GM23248 (cell line): ENCODE measurements at regions of chr18 and their contacts with region 1.

Region 1: GRCh38 chr18:45384137-45384961 is 230.9 kb upstream of the SLC14A2 start:
- DNase-seq: peak; percentile 70
- H3K4me3 ChIP-seq: no peak overlapping the region
- H3K27ac ChIP-seq: no peak overlapping the region
- H3K4me1 ChIP-seq: 0 out of 2 replicates have a peak, but pooled peaks cover 14% of the 10 kb centered on the region
- H3K27me3 ChIP-seq: no peaks in the 10 kb centered on the region

Region 2: DNA sequence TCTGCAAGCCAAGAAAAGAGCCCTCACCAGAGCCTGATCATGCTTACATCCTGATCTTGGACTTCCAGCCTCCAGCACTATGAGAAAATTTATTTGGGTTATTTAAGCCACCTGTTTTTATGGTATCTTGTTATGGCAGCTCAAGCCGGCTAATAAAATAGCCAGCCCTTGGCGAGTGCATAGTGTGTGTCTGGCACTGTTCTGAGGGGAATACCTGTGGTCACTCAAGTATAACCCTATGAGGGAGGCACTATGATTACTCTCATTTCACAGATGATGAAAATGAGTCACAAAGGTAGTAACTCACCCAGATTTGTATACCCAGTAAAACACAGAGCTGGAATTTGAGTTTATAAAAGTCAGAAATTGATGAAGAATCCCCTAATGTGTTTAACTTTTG is 1260.6 kb before region 1 on chr18:
- in situ Hi-C with region 1: loop called (anchors 25 kb)
- DNase-seq: no peak
- H3K4me3 ChIP-seq: no peak overlapping the region
- H3K27ac ChIP-seq: no peak overlapping the region
- H3K4me1 ChIP-seq: peaks cover 8% of the 10 kb centered on the region
- H3K27me3 ChIP-seq: no peaks in the 10 kb centered on the region

Region 3: GRCh38 chr18:44325903-44326635 is 1058.3 kb before region 1 on chr18:
- in situ Hi-C with region 1: loop called (anchors 25 kb)
- DNase-seq: peak; percentile 73
- H3K4me3 ChIP-seq: no peak overlapping the region
- H3K27ac ChIP-seq: no peak overlapping the region
- H3K4me1 ChIP-seq: no peaks in the 10 kb centered on the region; the same call in 1 of the 2 replicates
- H3K27me3 ChIP-seq: no peaks in the 10 kb centered on the region